Activated CD4-positive, alpha-beta T cell treated with anti-CD3 and anti-CD28 coated beads for 36 hours (primary cell): ENCODE measurements at regions of chr11 and their contacts with region 1.

Region 1: DNA sequence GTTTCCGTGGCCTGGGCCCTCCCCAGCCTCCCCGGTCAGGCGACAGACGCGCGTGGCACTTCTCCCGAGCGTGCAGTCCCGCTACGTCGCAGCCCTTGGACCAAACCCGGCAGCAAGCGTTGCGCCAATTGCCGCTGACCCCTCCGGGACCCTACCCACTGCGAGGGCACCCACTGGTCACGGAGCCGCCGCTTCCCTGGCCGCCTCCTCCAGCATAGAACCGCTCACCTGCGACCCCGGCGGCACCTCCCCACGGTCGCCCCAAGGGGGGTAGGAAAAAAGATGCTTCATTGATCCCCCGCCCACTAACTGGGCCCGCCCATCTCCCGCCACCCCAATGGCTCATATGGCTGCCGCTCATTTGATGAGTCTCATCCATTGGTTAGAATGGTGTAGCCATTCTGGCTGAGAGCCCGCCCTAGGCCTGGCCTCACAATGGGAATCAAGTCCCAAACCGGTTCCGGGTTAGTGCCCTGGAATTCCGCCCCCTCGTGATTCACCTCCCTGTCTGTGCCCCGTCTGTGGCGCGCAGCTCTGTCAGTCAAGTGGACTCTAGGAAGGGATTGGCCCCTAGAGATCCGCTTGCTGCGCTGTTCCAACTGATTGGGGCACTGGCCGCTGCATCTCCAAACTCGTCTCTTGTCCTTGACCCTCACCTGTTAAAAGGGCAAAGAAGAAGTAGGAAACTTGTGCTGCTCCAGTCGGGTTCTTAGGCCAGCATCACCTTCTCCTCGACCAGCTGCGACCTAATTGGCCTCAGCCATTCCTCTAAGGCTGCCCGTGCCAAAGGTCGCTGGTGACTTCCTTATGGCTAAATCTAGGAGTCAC is at the start of gene MSANTD4:
- DNase-seq: peak; percentile 98
- ATAC-seq: peak; percentile 98
- H3K4me3 Mint-ChIP-seq: peak within 1 kb of the TSS; percentile 91
- H3K27ac Mint-ChIP-seq: peak within 1 kb of the TSS; percentile 88
- H3K4me1 Mint-ChIP-seq: peaks cover 35% of the 10 kb centered on the region
- H3K27me3 Mint-ChIP-seq: peaks cover 2% of the 10 kb centered on the region
- total RNA-seq, gene MSANTD4: 12.4 to 13.1 TPM

Region 2: GRCh38 chr11:105838668-105839384 is 183.4 kb before region 1 on chr11:
- CTCF ChIA-PET with region 1: no interaction called
- POLR2A ChIA-PET with region 1: no interaction called
- intact Hi-C with region 1: no loop called
- DNase-seq: no peak
- ATAC-seq: no peak
- H3K4me3 Mint-ChIP-seq: no peak overlapping the region
- H3K27ac Mint-ChIP-seq: no peak overlapping the region
- H3K4me1 Mint-ChIP-seq: no peaks in the 10 kb centered on the region
- H3K27me3 Mint-ChIP-seq: no peaks in the 10 kb centered on the region

Region 3: GRCh38 chr11:106047636-106048035 is 25.5 kb after region 1 on chr11:
- CTCF ChIA-PET with region 1: no interaction called
- POLR2A ChIA-PET with region 1: no interaction called
- intact Hi-C with region 1: no loop called
- DNase-seq: no peak
- ATAC-seq: no peak
- H3K4me3 Mint-ChIP-seq: no peak overlapping the region
- H3K27ac Mint-ChIP-seq: no peak overlapping the region
- H3K4me1 Mint-ChIP-seq: no peaks in the 10 kb centered on the region
- H3K27me3 Mint-ChIP-seq: peaks cover 6% of the 10 kb centered on the region

Region 4: DNA sequence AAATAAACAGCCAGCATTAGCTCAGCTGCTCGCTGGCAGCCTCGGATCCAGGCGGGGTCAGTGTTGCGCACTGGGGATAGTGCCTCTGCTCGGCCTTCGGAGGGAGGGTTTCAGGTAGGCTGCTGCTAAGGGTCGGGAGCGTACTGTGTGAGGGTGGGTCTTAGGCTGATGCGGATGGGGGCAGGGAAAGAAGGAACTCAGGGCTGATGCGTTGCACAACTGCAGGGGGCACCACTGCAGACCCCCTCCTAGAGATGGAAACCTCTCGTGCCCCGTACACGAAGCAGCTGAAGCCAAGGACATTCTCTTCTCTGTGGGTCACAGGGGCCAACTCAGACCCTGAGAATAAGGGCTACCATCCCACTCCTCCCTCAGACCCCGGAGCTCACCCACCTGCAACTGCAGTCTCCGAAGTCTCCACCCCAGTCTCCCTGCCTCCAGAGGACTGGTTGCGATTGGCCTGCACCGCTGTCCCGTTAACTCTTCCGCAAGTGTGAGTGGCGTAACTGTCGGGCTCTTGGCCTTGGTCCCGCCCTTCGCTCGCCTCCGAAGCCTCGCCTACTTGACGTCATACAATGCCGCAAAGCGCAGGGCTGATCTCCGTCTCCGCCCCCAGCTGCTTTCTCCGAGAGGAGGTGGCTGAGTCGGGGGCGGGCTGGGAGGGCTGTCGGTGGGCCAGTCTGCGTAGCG is 54.9 kb after region 1 on chr11 and contains the start of gene KBTBD3:
- CTCF ChIA-PET with region 1: no interaction called
- POLR2A ChIA-PET with region 1: interaction called, 3 read pairs
- intact Hi-C with region 1: loop called (anchors 1 kb)
- DNase-seq: peak; percentile 99
- ATAC-seq: peak; percentile 97
- H3K4me3 Mint-ChIP-seq: peak within 1 kb of the TSS; percentile 87
- H3K27ac Mint-ChIP-seq: peak within 1 kb of the TSS; percentile 91
- H3K4me1 Mint-ChIP-seq: peaks cover 45% of the 10 kb centered on the region
- H3K27me3 Mint-ChIP-seq: no peaks in the 10 kb centered on the region
- total RNA-seq, gene KBTBD3: 8.9 to 9.1 TPM